OCI-LY7 (cell line): ENCODE measurements at regions of chr1 and their contacts with region 1.

Region 1: GRCh38 chr1:229856009-229856650 is 210.9 kb upstream of the GALNT2 start:
- DNase-seq: peak; percentile 87
- H3K4me3 ChIP-seq: peak overlapping the region; percentile 56
- H3K27ac ChIP-seq: peak overlapping the region; percentile 65
- H3K4me1 ChIP-seq: peaks cover 15% of the 10 kb centered on the region
- CTCF ChIP-seq: no peak

Region 2: GRCh38 chr1:229619614-229620013 is 236.5 kb before region 1 on chr1:
- CTCF ChIA-PET with region 1: no interaction called
- POLR2A ChIA-PET with region 1: no interaction called
- intact Hi-C with region 1: no loop called
- DNase-seq: no peak
- H3K4me3 ChIP-seq: no peak overlapping the region
- H3K27ac ChIP-seq: no peak overlapping the region
- H3K4me1 ChIP-seq: peaks cover 12% of the 10 kb centered on the region
- CTCF ChIP-seq: no peak

Region 3: GRCh38 chr1:229661022-229661877 is 194.9 kb before region 1 on chr1:
- CTCF ChIA-PET with region 1: no interaction called
- POLR2A ChIA-PET with region 1: no interaction called
- intact Hi-C with region 1: loop called (anchors 5 kb)
- DNase-seq: peak; percentile 79
- H3K4me3 ChIP-seq: no peak overlapping the region
- H3K27ac ChIP-seq: no peak overlapping the region
- H3K4me1 ChIP-seq: peaks cover 29% of the 10 kb centered on the region
- CTCF ChIP-seq: peak; percentile 94

Region 4: DNA sequence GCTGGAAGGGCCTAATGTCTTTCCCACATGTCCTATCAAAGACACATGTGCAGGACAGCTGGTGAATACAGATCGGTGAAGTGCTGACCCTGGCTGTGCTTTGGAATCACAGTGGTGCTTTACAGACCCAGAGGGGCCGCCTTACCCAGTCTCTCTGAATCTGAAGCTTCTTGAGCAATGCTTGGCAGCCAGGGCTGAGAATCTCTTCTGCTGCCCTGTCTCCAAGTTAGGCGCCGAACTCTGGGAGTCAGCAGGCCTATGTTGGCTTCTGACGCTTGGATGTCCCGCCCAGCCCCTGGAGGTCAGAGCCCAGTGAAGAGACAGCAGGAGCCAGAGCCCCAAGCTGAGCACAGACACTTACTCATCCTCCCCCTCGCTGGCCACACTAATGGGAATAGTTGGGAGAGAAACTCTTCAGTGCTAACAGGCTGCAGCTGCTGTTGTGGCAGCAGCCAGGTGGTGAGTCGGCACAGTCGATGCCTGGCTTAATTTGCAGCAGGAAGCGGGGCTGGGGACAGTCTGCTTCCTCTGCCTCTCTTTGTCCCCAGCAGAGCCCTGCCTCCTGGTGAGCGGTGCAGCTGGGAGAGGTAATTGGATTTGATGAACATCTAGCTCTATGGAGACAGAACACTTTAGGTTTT is 162.0 kb before region 1 on chr1:
- CTCF ChIA-PET with region 1: no interaction called
- POLR2A ChIA-PET with region 1: no interaction called
- intact Hi-C with region 1: loop called (anchors 5 kb)
- DNase-seq: peak; percentile 86
- H3K4me3 ChIP-seq: peak overlapping the region; percentile 42
- H3K27ac ChIP-seq: peak overlapping the region; percentile 97
- H3K4me1 ChIP-seq: peaks cover 77% of the 10 kb centered on the region
- CTCF ChIP-seq: no peak